CD8-positive, alpha-beta memory T cell (primary cell): ENCODE measurements at regions of chr4 and their contacts with region 1.

Region 1: GRCh38 chr4:164639001-164639400 is 114.9 kb upstream of the SMIM31 start:
- DNase-seq: no peak
- H3K4me3 ChIP-seq: no peak overlapping the region
- H3K4me3 Mint-ChIP-seq: no peak overlapping the region
- H3K27ac ChIP-seq: no peak overlapping the region
- H3K27ac Mint-ChIP-seq: no peak overlapping the region
- H3K4me1 ChIP-seq: no peaks in the 10 kb centered on the region
- H3K4me1 Mint-ChIP-seq: no peaks in the 10 kb centered on the region
- H3K27me3 ChIP-seq: no peaks in the 10 kb centered on the region
- H3K27me3 Mint-ChIP-seq: no peaks in the 10 kb centered on the region

Region 2: GRCh38 chr4:164383358-164384220 is 255.4 kb before region 1 on chr4:
- CTCF ChIA-PET with region 1: no interaction called
- POLR2A ChIA-PET with region 1: no interaction called
- DNase-seq: no peak
- H3K4me3 ChIP-seq: no peak overlapping the region
- H3K4me3 Mint-ChIP-seq: no peak overlapping the region
- H3K27ac ChIP-seq: no peak overlapping the region
- H3K27ac Mint-ChIP-seq: no peak overlapping the region
- H3K4me1 ChIP-seq: no peaks in the 10 kb centered on the region
- H3K4me1 Mint-ChIP-seq: no peaks in the 10 kb centered on the region
- H3K27me3 ChIP-seq: no peaks in the 10 kb centered on the region
- H3K27me3 Mint-ChIP-seq: peaks cover 0 to 21% of the 10 kb centered on the region in 2 donors

Region 3: DNA sequence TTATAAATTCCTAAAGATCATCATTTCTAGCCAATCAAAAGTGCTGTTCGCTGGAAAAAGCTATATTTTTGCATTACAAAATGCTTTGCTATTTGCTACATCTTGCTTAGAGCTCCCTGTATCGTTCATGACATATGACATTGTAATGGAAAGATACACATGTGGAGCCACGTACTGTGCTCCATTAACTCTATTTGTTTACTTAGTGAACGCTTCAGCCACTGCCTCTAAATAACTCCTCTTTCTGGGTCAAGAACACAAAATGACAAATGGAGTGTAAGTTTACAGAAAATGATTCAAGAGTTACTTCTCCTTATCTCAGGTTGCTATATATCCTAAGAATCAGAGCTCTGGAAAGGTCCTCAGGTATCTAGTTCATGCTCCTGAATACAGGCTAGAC is 214.2 kb before region 1 on chr4:
- CTCF ChIA-PET with region 1: no interaction called
- POLR2A ChIA-PET with region 1: interaction called, 14 read pairs
- DNase-seq: no peak
- H3K4me3 ChIP-seq: no peak overlapping the region
- H3K4me3 Mint-ChIP-seq: no peak overlapping the region
- H3K27ac ChIP-seq: no peak overlapping the region
- H3K27ac Mint-ChIP-seq: no peak overlapping the region
- H3K4me1 ChIP-seq: no peaks in the 10 kb centered on the region
- H3K4me1 Mint-ChIP-seq: no peaks in the 10 kb centered on the region
- H3K27me3 ChIP-seq: no peaks in the 10 kb centered on the region
- H3K27me3 Mint-ChIP-seq: no peaks in the 10 kb centered on the region